MCF 10A (cell line): ENCODE measurements at regions of chr1 and their contacts with region 1.

Region 1: GRCh38 chr1:55478742-55479141 is 263.6 kb upstream of the USP24 start:
- DNase-seq: peak; percentile 40
- H3K4me3 Mint-ChIP-seq: no peak overlapping the region
- H3K27ac Mint-ChIP-seq: no peak overlapping the region
- H3K4me1 Mint-ChIP-seq: peaks cover 12% of the 10 kb centered on the region
- H3K27me3 Mint-ChIP-seq: no peaks in the 10 kb centered on the region
- CTCF ChIP-seq: peak; percentile 34

Region 2: GRCh38 chr1:55522353-55522903 is 43.7 kb after region 1 on chr1:
- CTCF ChIA-PET with region 1: no interaction called
- POLR2A ChIA-PET with region 1: no interaction called
- intact Hi-C with region 1: no loop called
- DNase-seq: no peak
- H3K4me3 Mint-ChIP-seq: no peak overlapping the region
- H3K27ac Mint-ChIP-seq: no peak overlapping the region
- H3K4me1 Mint-ChIP-seq: no peaks in the 10 kb centered on the region
- H3K27me3 Mint-ChIP-seq: peaks cover 13% of the 10 kb centered on the region
- CTCF ChIP-seq: no peak

Region 3: DNA sequence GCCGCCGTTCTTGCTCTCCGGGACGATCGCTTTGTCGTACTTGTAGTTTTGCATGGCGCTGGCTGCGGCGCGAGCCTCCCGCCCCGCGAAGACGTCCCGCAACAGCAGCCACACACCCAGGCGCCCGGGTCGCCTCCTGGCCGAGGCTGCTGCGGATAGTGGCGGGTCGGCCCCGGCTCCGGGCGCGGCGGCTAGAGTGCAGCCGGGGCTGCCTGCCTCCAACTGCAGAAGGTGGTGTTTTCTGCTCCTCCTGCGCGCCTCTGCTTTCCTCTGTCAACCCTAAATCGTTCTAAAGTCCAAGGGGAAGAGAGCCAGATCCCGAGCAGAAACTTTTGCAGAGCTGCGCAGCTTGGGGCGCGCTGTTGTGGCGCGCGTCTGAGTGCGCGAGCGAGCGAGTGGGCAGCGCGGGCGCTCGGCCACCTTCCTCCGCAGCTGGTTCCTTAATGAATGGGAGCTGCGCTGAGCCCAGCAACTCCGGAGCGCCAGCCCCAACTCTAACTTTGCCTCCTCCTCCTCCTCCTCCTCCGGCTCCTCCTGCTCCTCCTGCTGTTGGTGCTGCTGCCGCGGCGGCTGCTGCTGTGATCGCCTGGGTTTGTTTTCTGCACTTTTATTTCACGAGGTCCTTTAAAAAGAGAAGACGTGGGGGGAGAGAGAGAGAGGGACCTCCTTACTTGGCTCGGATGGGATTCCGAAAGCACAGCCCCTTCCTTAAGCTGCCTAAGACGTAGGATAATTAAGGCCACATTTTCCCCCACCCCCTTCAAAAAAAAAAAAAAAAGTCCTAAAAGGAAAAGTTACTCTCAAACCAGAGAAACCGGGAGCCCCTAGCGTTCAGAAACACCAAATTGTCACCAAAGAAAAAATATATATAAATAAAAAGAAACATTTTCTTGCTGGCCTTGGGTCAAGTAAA is 1100.5 kb after region 1 on chr1 and contains the start of gene PLPP3:
- CTCF ChIA-PET with region 1: interaction called, 39 read pairs
- POLR2A ChIA-PET with region 1: no interaction called
- intact Hi-C with region 1: loop called (anchors 2 kb)
- DNase-seq: peak; percentile 85
- H3K4me3 Mint-ChIP-seq: peak within 1 kb of the TSS; percentile 97
- H3K27ac Mint-ChIP-seq: peak within 1 kb of the TSS; percentile 33
- H3K4me1 Mint-ChIP-seq: no peaks in the 10 kb centered on the region
- H3K27me3 Mint-ChIP-seq: no peaks in the 10 kb centered on the region
- CTCF ChIP-seq: no peak
- total RNA-seq, gene PLPP3: 0.84 and 1.3 TPM in 2 replicates